ENCODE measurements at regions of chr15 and their contacts with region 1.

Region 1: GRCh38 chr15:74265046-74265639 is 29.0 kb downstream of the CCDC33 start:
- DNase-seq: peak; percentile 25 to 53
- ATAC-seq: no peak
- H3K4me3 ChIP-seq: no peak overlapping the region
- H3K27ac ChIP-seq: no peak overlapping the region
- H3K4me1 ChIP-seq: no peaks in the 10 kb centered on the region
- H3K27me3 ChIP-seq: peaks cover 0 to 27% (median 8%) of the 10 kb centered on the region in 3 donors
- CTCF ChIP-seq: no peak

Region 2: DNA sequence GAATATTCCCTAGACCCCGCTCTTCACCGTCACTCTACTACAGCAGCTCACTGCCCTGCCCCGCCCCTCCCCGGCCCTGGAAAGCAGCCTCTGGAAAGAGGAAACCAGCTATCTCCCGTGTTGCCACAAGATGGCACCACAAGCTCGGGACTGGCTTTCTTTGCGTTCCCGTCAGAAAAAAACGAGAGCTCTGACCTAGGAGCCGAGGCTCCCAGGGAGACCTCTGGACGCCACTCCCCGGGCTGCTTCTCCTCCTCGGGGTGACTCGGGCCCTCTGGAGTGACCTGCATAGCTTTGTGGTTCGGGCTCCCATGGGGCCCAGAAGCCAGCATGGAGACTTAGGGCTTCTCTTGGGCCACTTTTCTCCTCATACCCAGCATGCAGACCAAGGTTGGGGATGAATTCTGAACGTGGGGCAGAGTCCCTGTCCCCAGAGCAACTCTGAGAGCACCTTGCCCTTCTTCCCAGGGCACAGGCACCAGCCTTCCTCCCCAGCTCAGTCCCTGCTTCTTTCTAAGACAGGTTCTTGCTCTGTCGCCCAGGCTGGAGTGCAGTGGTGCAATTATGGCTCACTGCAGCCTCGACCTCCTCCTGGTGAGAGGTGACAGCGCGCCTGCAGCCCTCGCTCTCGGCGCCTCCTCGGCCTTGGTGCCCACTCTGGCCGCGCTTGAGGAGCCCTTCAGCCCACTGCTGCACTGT is 292.0 kb before region 1 on chr15:
- intact Hi-C with region 1: no loop called
- DNase-seq: peak; percentile 86 to 90
- ATAC-seq: peak; percentile 90 to 98 (median 94)
- H3K4me3 ChIP-seq: peak overlapping the region; percentile 32
- H3K27ac ChIP-seq: no peak overlapping the region
- H3K4me1 ChIP-seq: no peaks in the 10 kb centered on the region
- H3K27me3 ChIP-seq: no peaks in the 10 kb centered on the region
- CTCF ChIP-seq: peak; percentile 77

Region 3: GRCh38 chr15:74222240-74223119 is 42.7 kb before region 1 on chr15:
- intact Hi-C with region 1: loop called in 1 of 2 experiments (anchors 1 kb)
- DNase-seq: no peak
- ATAC-seq: no peak
- H3K4me3 ChIP-seq: no peak overlapping the region
- H3K27ac ChIP-seq: no peak overlapping the region
- H3K4me1 ChIP-seq: no peaks in the 10 kb centered on the region
- H3K27me3 ChIP-seq: peaks cover 0 to 27% (median 8%) of the 10 kb centered on the region in 3 donors
- CTCF ChIP-seq: no peak